MCF 10A (cell line): ENCODE measurements at regions of chr5 and their contacts with region 1.

Region 1: GRCh38 chr5:149345147-149345875 is at the start of gene GRPEL2:
- DNase-seq: peak; percentile 99
- H3K4me3 Mint-ChIP-seq: peak within 1 kb of the TSS; percentile 96
- H3K27ac Mint-ChIP-seq: peak within 1 kb of the TSS; percentile 94
- H3K4me1 Mint-ChIP-seq: peaks cover 22% of the 10 kb centered on the region
- H3K27me3 Mint-ChIP-seq: no peaks in the 10 kb centered on the region
- CTCF ChIP-seq: no peak
- total RNA-seq, gene GRPEL2: 69.5 and 86.6 TPM in 2 replicates

Region 2: DNA sequence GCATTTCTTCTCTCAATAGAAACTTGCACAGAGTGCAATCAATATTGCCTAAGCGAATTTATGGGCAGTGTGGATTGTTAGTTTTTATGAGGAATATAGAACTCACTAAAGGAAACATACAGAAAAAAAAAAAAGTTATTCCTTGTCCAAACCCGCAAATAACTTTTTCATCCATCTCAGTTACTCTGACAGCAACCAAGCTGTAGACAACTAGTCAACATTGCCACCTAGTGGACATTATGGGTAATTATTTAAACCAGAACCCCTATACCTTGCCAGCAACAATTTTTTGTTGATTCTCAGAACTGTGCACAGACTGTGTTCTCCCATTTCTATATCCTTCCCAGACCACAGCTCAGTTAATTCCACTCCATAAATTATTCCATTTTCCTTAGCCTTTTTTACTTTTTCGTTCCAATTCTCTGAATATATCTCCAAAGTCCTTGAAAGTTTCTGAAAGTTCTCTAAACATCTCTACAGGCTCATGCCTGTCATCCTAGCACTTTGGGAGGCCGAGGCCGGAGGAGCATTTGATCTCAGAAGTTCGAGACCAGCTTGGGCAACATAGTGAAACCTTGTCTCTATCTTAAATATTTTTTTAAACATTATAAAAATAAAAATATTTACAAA is 76.3 kb before region 1 on chr5:
- CTCF ChIA-PET with region 1: interaction called, 3 read pairs
- POLR2A ChIA-PET with region 1: interaction called, 10 read pairs
- intact Hi-C with region 1: no loop called
- DNase-seq: peak; percentile 84
- H3K4me3 Mint-ChIP-seq: no peak overlapping the region
- H3K27ac Mint-ChIP-seq: no peak overlapping the region
- H3K4me1 Mint-ChIP-seq: peaks cover 14% of the 10 kb centered on the region
- H3K27me3 Mint-ChIP-seq: no peaks in the 10 kb centered on the region
- CTCF ChIP-seq: peak; percentile 91

Region 3: DNA sequence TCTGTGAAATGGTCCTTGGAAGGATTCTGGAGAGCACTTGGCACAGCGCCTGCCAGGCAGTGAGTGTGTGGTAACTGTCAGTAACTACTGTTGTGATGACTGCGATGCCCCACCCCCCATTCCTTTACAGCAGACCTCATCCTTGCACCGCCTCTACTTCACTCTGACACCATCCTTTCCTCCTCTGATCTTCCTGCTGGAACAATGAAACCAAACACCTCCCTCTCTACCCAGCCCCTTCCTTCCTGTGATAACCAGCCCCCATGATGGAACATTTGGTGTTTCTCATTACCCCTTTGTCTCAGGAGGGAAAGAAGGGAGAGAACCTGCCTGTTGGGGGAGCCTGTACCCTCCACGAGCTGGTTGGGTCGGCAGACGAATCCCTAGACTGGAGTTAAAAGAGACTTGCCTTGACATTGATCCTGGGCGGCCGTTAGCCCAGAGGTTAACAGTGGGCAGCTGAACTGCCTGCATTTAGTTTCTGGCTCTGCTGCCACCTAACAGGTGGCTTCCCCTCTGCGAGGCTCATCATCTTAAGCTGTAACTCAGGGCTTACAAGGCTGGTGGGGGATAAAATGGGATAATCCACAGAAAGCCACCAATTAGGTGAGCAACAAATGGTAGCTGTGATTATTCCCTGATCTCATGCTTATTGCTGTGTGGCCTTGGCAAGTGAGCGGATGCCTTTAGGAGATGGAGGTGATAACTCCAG is 34.2 kb before region 1 on chr5:
- CTCF ChIA-PET with region 1: interaction called, 1,231 read pairs
- POLR2A ChIA-PET with region 1: interaction called, 10 read pairs
- intact Hi-C with region 1: loop called (anchors 2 kb)
- DNase-seq: peak; percentile 50
- H3K4me3 Mint-ChIP-seq: no peak overlapping the region
- H3K27ac Mint-ChIP-seq: no peak overlapping the region
- H3K4me1 Mint-ChIP-seq: peaks cover 5% of the 10 kb centered on the region
- H3K27me3 Mint-ChIP-seq: no peaks in the 10 kb centered on the region
- CTCF ChIP-seq: no peak

Region 4: DNA sequence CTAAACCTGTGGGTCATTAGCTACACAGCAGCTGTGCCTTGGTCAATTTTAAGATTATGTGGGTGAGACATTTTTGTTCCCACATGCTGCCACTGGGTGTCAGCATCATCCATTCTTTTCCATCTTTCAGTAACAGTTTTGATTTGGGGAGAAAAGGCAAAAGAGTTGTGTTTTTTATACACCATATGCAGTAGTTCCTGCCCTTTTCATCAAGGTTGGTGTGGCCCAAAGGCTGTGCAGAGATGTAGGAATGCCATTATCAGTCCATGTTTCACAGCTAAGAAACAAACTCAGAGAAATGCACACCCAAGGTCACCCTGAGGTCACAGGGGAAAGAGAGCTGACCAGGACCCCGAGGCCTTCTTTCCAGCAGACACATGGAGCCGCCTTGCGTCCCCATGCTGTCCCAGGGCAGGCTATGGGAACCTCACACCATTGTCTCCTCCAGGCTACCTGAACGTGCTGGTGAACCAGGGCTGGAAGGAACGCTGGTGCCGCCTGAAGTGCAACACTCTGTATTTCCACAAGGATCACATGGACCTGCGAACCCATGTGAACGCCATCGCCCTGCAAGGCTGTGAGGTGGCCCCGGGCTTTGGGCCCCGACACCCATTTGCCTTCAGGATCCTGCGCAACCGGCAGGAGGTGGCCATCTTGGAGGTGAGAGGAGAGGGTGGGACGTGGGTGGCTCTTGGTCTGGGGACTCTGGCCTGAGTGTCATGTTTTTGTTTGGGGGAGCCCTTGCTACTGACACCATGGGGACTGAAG is 27.8 kb before region 1 on chr5:
- CTCF ChIA-PET with region 1: interaction called, 1,231 read pairs
- POLR2A ChIA-PET with region 1: interaction called, 213 read pairs
- intact Hi-C with region 1: loop called (anchors 2 kb)
- DNase-seq: peak; percentile 71
- H3K4me3 Mint-ChIP-seq: no peak overlapping the region
- H3K27ac Mint-ChIP-seq: no peak overlapping the region
- H3K4me1 Mint-ChIP-seq: peaks cover 12% of the 10 kb centered on the region
- H3K27me3 Mint-ChIP-seq: no peaks in the 10 kb centered on the region
- CTCF ChIP-seq: peak; percentile 78

Region 5: DNA sequence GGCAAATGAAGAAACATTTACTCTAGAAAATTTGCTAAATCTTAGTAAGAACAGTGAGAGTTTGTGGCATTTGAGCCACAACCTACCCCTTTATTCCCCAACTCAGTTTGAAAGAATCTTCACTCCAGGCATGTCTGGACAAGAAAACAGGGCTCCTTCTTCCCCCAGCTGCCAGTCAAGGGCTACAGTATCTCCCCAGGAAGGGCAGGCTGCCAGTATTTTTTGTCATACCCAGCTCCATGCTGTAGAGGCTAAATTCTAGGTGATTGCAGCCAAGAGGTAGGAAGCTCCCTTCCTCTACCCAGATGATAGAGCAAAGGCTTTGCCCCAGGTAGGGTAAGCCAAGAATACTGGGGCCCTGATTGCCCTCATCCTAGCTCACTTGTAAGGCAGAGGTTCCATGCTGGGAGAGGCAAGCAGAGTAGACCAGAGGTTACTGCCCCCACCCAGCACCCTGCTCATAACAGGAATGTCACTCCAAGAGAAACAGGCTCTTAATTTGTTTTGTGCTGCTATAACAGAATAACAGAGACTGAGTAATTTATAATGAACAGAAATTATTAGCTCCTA is 20.1 kb before region 1 on chr5:
- CTCF ChIA-PET with region 1: interaction called, 1,231 read pairs
- POLR2A ChIA-PET with region 1: interaction called, 213 read pairs
- intact Hi-C with region 1: no loop called
- DNase-seq: peak; percentile 92
- H3K4me3 Mint-ChIP-seq: no peak overlapping the region
- H3K27ac Mint-ChIP-seq: peak overlapping the region; percentile 96
- H3K4me1 Mint-ChIP-seq: peaks cover 36% of the 10 kb centered on the region
- H3K27me3 Mint-ChIP-seq: no peaks in the 10 kb centered on the region
- CTCF ChIP-seq: no peak

Region 6: GRCh38 chr5:149333711-149334443 is 11.4 kb before region 1 on chr5:
- CTCF ChIA-PET with region 1: interaction called, 1,231 read pairs
- POLR2A ChIA-PET with region 1: interaction called, 42 read pairs
- intact Hi-C with region 1: no loop called
- DNase-seq: no peak
- H3K4me3 Mint-ChIP-seq: no peak overlapping the region
- H3K27ac Mint-ChIP-seq: peak overlapping the region; percentile 4
- H3K4me1 Mint-ChIP-seq: no peaks in the 10 kb centered on the region
- H3K27me3 Mint-ChIP-seq: no peaks in the 10 kb centered on the region
- CTCF ChIP-seq: no peak

Region 7: DNA sequence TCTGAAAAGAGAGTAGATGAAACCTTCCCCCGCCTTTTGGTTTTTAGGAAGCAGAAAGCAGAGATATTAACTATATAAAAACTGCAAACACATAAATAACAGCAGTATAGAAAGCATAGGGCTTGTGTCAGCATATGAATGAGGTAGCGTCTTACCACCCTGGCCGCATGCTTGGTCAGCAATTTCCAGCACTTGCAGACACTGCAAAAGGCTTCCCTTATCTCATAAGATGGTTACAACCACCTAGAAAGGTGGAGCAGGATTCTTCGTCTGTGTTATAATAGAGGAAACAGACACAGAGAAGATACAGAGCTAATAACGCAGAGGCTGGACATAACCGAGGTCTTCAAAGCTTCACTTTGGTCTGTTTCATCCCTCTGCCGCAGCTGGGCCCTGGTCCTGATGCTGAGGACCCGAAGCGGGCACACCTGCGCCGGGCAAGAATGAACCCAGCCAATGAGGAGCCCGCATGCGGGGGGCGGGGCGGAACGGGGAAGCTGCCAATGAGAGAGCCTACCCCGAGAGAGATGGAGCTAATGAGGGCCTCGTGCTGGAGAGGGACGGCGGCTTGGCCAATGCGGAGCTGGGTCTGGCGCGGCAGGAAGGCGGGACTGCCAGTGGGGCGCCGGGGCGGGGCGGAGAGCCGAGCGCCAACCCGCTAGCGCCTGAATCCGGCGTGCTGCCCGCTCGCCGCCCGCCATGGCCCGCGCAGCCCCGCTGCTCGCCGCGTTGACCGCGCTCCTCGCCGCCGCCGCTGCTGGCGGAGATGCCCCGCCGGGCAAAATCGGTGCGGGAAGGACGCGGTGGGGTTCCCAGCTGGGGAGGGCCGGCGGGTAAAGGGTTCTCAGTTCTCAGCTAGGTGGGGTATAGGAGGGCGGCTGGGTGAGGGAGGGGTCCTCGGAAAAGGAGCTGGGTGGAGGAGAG is 12.3 kb after region 1 on chr5 and contains the start of gene PCYOX1L:
- CTCF ChIA-PET with region 1: interaction called, 12 read pairs
- POLR2A ChIA-PET with region 1: interaction called, 134 read pairs
- intact Hi-C with region 1: no loop called
- DNase-seq: peak; percentile 99
- H3K4me3 Mint-ChIP-seq: peak within 1 kb of the TSS; percentile 82
- H3K27ac Mint-ChIP-seq: no peak within 1 kb of the TSS
- H3K4me1 Mint-ChIP-seq: peaks cover 12% of the 10 kb centered on the region
- H3K27me3 Mint-ChIP-seq: no peaks in the 10 kb centered on the region
- CTCF ChIP-seq: no peak
- total RNA-seq, gene PCYOX1L: 7.7 and 8.0 TPM in 2 replicates